BJ (cell line): ENCODE measurements at regions of chr19 and their contacts with region 1.

Region 1: DNA sequence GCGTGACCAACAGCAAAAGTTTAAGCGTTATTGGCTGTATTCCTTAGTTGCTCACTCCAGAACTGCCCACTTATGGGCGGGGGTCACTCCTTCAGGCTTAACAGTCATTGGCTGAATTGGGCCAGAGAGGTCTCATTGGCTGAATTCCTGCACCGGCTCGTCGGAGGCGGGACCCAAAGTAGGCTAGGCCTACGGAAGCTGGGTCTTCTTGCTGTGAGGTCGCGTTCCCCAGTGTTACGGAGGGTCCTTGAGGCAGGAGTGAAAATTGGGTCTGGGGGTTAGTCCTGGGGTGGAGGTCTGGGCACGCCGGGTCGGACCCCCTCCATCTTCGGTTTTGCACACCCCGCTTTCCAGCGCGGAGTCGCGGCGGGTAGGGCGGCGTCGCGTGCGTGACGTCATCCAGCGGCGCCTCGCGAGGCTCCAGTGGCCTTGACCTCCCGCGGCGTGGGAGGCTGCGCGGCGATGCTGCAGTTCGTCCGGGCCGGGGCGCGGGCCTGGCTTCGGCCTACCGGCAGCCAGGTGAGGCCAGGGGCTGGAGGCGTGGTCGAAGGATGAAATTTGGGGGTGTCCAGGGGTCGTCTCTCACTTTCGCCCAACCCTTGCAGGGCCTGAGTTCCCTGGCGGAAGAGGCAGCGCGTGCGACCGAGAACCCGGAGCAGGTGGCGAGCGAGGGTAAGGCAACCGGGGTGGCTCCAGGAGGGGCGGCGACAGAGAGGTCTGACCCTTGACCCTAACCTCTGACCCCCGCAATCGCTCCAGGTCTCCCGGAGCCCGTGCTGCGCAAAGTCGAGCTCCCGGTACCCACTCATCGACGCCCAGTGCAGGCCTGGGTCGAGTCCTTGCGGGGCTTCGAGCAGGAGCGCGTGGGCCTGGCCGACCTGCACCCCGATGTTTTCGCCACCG is at the start of gene MRPL4:
- DNase-seq: peak; percentile 92
- H3K4me3 ChIP-seq: peak within 1 kb of the TSS; percentile 97
- H3K27me3 ChIP-seq: no peaks in the 10 kb centered on the region
- CTCF ChIP-seq: no peak
- polyA plus RNA-seq, gene MRPL4: 35.4 and 58.7 TPM in 2 replicates

Region 2: DNA sequence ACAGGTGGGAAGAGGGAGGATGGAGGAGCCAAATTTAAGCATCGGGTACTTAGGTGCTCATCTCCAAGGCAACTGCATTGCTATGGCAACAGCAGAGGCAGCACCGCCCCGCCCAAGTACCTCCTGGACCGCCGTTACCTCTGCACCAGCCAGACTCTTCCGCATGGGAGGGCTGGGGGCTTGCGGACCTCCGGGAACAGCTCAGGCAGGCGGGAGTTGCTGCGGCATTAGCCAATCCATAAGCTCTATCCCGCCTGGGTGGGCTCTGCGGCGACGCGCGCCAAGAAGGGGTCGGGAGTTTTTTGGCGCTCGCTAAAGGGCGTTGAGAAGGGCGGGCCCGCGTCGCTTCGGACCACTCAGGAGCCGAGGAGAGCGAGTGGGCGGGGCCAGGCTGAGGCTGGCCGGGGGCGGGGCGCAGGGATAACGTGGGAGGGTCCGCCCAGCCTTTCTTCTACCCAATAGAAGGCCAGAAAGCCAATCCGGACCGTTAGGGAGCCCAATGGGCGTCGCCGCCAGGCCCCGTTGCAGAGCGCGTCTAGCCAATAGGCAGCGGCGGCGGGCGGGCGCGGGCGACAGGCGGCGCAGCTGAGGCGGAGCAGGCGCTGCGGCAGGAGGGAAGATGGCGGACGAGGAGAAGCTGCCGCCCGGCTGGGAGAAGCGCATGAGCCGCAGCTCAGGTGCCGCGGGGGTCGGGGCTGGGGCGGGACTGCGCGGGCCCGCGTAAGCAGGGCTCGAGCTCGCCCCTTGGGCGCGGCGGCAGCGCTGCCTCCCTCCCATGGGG is 417.1 kb before region 1 on chr19 and contains the start of gene PIN1:
- CTCF ChIA-PET with region 1: no interaction called
- POLR2A ChIA-PET with region 1: interaction called, 14 read pairs
- DNase-seq: peak; percentile 91
- H3K4me3 ChIP-seq: peak within 1 kb of the TSS; percentile 94
- H3K27me3 ChIP-seq: no peaks in the 10 kb centered on the region
- CTCF ChIP-seq: peak; percentile 50
- polyA plus RNA-seq, gene PIN1: 56.4 and 89.6 TPM in 2 replicates

Region 3: GRCh38 chr19:10095948-10096621 is 156.0 kb before region 1 on chr19:
- CTCF ChIA-PET with region 1: interaction called, 77 read pairs
- POLR2A ChIA-PET with region 1: no interaction called
- DNase-seq: peak; percentile 50
- H3K4me3 ChIP-seq: peak overlapping the region; percentile 54
- H3K27me3 ChIP-seq: no peaks in the 10 kb centered on the region
- CTCF ChIP-seq: no peak

Region 4: GRCh38 chr19:10120538-10121189 is 131.4 kb before region 1 on chr19:
- CTCF ChIA-PET with region 1: interaction called, 32 read pairs
- POLR2A ChIA-PET with region 1: no interaction called
- DNase-seq: peak; percentile 68
- H3K4me3 ChIP-seq: no peak overlapping the region; the same call in 1 of the 2 replicates
- H3K27me3 ChIP-seq: no peaks in the 10 kb centered on the region
- CTCF ChIP-seq: no peak

Region 5: GRCh38 chr19:10230861-10231611 is 21.0 kb before region 1 on chr19 and contains the start of gene S1PR2:
- CTCF ChIA-PET with region 1: interaction called, 31 read pairs
- POLR2A ChIA-PET with region 1: no interaction called
- DNase-seq: no peak
- H3K4me3 ChIP-seq: peak within 1 kb of the TSS; percentile 95
- H3K27me3 ChIP-seq: no peaks in the 10 kb centered on the region
- CTCF ChIP-seq: no peak
- polyA plus RNA-seq, gene S1PR2: 10.4 and 12.5 TPM in 2 replicates

Region 6: DNA sequence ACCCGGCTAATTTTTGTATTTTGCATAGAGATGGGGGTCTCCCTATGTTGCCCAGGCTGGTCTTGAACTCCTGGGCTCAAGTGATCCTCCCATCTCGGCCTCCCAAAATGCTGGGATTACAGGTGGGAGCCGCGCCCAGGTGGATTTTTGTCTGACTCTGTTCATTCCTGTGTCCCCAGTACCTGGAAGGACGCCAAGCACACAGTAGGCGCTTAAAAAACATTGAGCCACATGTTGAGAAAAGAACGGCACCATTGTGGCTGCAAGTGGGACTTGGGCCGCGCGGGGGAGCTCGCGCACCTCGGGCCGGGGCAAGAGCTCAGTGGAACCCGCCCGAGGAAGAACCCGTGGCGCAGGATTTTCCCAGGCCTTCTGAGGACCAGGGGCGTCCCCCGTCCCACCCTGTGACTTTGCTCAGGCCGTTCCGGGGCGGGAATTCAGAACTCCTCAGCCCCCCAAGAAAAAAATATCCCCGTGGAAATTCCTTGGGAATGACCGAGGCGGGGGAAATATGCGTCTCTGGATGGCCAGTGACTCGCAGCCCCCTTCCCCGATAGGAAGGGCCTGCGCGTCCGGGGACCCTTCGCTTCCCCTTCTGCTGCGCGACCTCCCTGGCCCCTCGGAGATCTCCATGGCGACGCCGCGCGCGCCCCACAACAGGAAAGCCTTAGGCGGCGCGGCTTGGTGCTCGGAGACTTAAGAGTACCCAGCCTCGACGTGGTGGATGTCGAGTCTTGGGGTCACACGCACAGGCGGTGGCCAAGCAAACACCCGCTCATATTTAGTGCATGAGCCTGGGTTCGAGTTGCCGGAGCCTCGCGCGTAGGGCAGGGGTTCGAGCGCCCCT is 17.5 kb after region 1 on chr19:
- CTCF ChIA-PET with region 1: interaction called, 53 read pairs
- POLR2A ChIA-PET with region 1: no interaction called
- DNase-seq: no peak
- H3K4me3 ChIP-seq: no peak overlapping the region; the same call in 1 of the 2 replicates
- H3K27me3 ChIP-seq: no peaks in the 10 kb centered on the region
- CTCF ChIP-seq: peak; percentile 97